ENCODE measurements at regions of chr18 and their contacts with region 1.

Region 1: GRCh38 chr18:50099725-50100407 is 95.1 kb downstream of the MYO5B start:
- DNase-seq: peak; percentile 98
- H3K4me3 ChIP-seq: no peak overlapping the region
- H3K27ac ChIP-seq: peak overlapping the region; percentile 75
- H3K4me1 ChIP-seq: peaks cover 45% of the 10 kb centered on the region
- H3K27me3 ChIP-seq: no peaks in the 10 kb centered on the region
- CTCF ChIP-seq: no peak

Region 2: DNA sequence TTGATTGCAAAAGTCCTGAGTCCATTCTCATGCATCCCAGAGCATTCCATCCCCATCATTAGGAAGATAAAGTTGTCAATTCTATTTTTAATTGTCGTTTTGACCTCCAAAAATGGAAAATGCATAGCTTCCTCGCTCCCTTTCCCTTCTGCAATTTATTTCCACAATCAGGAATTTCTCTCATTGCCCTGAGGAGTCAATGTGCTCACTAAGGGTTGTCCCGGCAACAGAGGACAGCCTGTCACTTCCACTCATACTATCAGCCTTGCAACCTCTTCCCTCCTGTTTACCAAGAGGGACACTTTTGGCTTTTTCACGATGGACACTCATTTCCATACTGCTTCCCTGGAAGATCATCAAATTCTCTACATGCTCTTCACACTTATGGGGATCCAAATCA is 69.7 kb before region 1 on chr18:
- CTCF ChIA-PET with region 1: no interaction called
- dilution Hi-C with region 1: no loop called
- in situ Hi-C with region 1: no loop called
- intact Hi-C with region 1: no loop called
- DNase-seq: no peak
- H3K4me3 ChIP-seq: no peak overlapping the region
- H3K27ac ChIP-seq: no peak overlapping the region
- H3K4me1 ChIP-seq: peaks cover 5% of the 10 kb centered on the region
- H3K27me3 ChIP-seq: no peaks in the 10 kb centered on the region
- CTCF ChIP-seq: no peak

Region 3: GRCh38 chr18:50079581-50080295 is 20.1 kb before region 1 on chr18:
- CTCF ChIA-PET with region 1: no interaction called
- dilution Hi-C with region 1: no loop called
- in situ Hi-C with region 1: no loop called
- intact Hi-C with region 1: loop called (anchors 1 kb)
- DNase-seq: no peak
- H3K4me3 ChIP-seq: no peak overlapping the region
- H3K27ac ChIP-seq: no peak overlapping the region
- H3K4me1 ChIP-seq: peaks cover 25% of the 10 kb centered on the region
- H3K27me3 ChIP-seq: no peaks in the 10 kb centered on the region
- CTCF ChIP-seq: no peak

Region 4: GRCh38 chr18:50177294-50177992 is 77.6 kb after region 1 on chr18:
- CTCF ChIA-PET with region 1: no interaction called
- dilution Hi-C with region 1: loop called (anchors 5 kb)
- in situ Hi-C with region 1: no loop called
- intact Hi-C with region 1: no loop called
- DNase-seq: no peak
- H3K4me3 ChIP-seq: no peak overlapping the region
- H3K27ac ChIP-seq: no peak overlapping the region
- H3K4me1 ChIP-seq: peaks cover 1% of the 10 kb centered on the region
- H3K27me3 ChIP-seq: no peaks in the 10 kb centered on the region
- CTCF ChIP-seq: no peak

Region 5: GRCh38 chr18:50454387-50454988 is 354.6 kb after region 1 on chr18:
- CTCF ChIA-PET with region 1: no interaction called
- dilution Hi-C with region 1: no loop called
- in situ Hi-C with region 1: no loop called
- intact Hi-C with region 1: no loop called
- DNase-seq: peak; percentile 64
- H3K4me3 ChIP-seq: no peak overlapping the region
- H3K27ac ChIP-seq: no peak overlapping the region
- H3K4me1 ChIP-seq: peaks cover 13% of the 10 kb centered on the region
- H3K27me3 ChIP-seq: no peaks in the 10 kb centered on the region
- CTCF ChIP-seq: no peak